Activated naive CD4-positive, alpha-beta T cell treated with anti-CD3 and anti-CD28 coated beads for 36 hours (primary cell): ENCODE measurements at regions of chr2 and their contacts with region 1.

Region 1: GRCh38 chr2:64523666-64524603 is at the start of gene AFTPH:
- DNase-seq: peak; percentile 99
- H3K4me3 Mint-ChIP-seq: peak within 1 kb of the TSS; percentile 99
- H3K27ac Mint-ChIP-seq: peak within 1 kb of the TSS; percentile 100
- H3K4me1 Mint-ChIP-seq: peaks cover 26% of the 10 kb centered on the region
- H3K27me3 Mint-ChIP-seq: no peaks in the 10 kb centered on the region
- total RNA-seq, gene AFTPH: 25.3 to 27.3 TPM

Region 2: DNA sequence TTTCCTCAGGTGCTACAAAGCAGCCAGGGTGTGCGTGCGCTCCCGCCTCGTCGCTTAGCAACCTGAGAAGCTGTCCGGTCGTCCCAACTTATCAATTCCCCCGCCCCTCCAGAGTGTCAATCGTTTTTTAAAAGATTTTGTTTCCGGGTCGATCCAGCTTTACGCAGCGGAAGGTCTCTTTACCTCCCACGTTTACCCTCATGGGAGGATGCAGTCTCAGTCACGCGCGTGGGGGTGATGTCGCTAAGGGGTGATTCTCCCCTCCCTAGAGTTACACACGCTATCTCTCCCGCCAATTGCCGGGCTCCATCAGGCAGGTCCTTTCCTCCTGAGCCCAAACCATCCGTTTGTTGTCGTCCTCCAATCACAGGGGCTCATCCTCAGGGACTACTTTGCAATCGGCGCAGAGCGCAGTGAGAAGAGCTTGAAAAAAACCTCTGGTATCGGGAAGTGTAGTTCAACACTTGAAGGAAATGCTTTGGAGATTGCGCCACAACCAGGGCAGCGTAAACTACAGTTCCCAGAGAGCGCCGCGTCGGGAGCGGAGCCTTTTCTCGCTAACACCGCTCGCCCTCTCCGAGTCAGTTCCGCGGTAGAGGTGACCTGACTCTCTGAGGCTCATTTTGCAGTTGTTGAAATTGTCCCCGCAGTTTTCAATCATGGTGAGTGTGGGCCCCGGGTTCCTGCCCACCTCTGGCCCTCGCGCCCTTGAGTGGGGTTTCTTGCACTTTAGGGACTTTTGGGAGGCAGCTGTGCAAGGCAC is 935.4 kb before region 1 on chr2 and contains the starts of genes MDH1 and WDPCP:
- CTCF ChIA-PET with region 1: no interaction called
- intact Hi-C with region 1: loop called (anchors 1 kb)
- DNase-seq: peak; percentile 95
- H3K4me3 Mint-ChIP-seq: peak within 1 kb of the TSS; percentile 99
- H3K27ac Mint-ChIP-seq: peak within 1 kb of the TSS; percentile 94
- H3K4me1 Mint-ChIP-seq: peaks cover 31% of the 10 kb centered on the region
- H3K27me3 Mint-ChIP-seq: no peaks in the 10 kb centered on the region
- total RNA-seq, gene MDH1: 269 to 275 TPM
- total RNA-seq, gene WDPCP: 5.6 to 5.7 TPM

Region 3: DNA sequence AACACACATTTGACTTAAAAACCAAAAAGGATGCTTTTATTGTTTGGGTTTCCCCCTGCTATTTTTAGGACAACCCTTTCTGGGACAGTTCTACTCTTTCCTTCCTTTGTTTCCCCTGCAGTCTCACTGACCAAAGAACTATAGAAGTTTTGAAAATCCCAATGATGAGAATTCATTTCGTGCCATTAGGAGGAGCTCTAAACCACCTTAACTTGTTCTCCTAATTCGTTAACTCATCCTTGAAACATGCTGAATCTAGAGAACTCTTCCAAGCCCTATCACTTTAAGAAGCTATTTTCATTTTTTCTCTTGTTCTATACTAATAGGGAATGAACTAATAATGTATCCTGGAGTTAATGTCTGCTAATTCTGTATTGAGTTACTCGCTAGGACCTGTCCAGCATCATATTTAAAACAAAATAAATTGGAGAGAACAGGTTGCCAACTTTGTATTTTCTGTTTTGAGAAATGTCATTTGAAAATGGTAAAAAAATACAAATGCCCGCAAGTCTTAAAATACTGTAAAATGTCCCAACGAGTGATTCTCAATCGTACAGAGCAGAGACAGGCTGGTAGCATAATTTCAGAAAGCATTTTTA is 63.0 kb after region 1 on chr2:
- CTCF ChIA-PET with region 1: interaction called, 12 read pairs
- intact Hi-C with region 1: loop called (anchors 2 kb)
- DNase-seq: no peak
- H3K4me3 Mint-ChIP-seq: no peak overlapping the region
- H3K27ac Mint-ChIP-seq: no peak overlapping the region
- H3K4me1 Mint-ChIP-seq: peaks cover 16% of the 10 kb centered on the region
- H3K27me3 Mint-ChIP-seq: no peaks in the 10 kb centered on the region

Region 4: DNA sequence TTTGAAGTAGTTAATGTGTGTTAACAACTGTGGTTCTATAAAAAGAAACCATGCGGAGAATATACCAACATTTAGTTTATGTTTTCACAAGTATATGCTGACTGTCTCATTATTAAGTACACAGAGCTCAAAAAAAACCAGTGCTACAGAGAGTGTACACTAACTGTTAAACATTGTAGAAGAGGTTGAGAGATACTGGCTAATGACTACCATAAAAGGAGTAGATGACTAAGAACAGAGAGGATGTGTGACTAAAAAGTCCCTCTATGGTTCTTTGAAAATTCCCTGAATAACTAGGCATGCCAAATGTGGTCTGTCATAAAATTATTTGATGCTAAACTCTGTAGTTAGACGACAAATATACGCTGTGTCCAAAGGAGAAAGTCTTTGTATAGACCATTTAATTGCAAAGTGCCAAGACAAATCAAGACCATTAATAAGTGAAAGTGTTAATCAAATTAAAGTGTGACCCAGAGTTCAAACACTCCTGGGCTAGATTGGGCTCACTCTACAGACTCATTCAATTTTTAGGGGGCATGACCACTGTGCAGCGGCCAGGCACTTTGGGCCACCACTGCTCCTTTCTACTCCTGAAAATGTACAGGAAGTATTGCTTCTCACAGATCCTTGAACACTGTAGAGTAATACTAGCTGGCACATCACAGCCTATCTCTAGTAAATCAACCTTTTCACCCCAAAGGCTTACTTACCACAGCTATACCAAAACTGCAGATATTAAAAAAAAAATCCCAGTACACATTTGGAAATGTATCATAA is 174.9 kb after region 1 on chr2:
- CTCF ChIA-PET with region 1: no interaction called
- intact Hi-C with region 1: loop called (anchors 1 kb)
- DNase-seq: no peak
- H3K4me3 Mint-ChIP-seq: peak overlapping the region; percentile 8
- H3K27ac Mint-ChIP-seq: peak overlapping the region; percentile 68
- H3K4me1 Mint-ChIP-seq: peaks cover 47% of the 10 kb centered on the region
- H3K27me3 Mint-ChIP-seq: no peaks in the 10 kb centered on the region

Region 5: DNA sequence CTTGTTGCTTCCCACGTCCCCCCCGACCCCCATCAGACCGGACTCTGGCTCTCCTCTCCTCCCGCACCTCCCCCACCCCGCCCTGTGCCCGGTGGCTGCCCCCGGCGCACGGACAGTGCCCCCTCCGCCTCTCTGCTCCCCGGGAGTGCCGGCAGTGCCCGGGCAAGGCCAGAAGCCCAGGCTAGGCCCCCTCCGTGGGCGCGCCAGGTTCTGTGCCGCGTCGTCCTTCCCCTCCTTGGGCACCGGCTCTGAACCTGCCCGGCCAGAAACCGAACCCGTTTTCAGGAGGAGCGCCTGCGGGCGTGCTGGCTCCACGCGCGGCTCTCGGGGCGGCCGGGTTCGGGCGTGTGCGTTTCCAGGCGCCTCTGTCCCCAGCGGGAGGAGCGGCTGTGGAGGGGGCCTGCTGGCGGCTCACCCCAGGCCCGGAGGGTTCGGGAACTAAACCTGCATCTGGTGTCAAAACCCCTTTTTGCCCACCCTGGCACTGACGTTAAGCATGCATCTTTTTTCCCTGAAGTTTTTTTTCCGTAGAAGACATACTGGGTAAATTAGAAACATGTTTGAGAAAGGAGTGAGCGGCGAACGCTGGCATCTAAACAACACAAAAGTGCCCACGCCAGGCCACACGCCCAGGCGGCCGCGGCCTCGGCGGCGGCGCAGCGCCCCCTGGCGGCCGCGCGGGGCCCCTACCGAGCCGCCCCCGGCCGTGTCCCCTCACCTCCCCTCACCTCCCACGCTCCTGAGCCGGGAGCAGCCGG is 341.3 kb after region 1 on chr2:
- CTCF ChIA-PET with region 1: interaction called, 10 read pairs
- intact Hi-C with region 1: loop called (anchors 1 kb)
- DNase-seq: peak; percentile 59
- H3K4me3 Mint-ChIP-seq: peak overlapping the region; percentile 55
- H3K27ac Mint-ChIP-seq: no peak overlapping the region
- H3K4me1 Mint-ChIP-seq: no peaks in the 10 kb centered on the region
- H3K27me3 Mint-ChIP-seq: peaks cover 3% of the 10 kb centered on the region

Region 6: DNA sequence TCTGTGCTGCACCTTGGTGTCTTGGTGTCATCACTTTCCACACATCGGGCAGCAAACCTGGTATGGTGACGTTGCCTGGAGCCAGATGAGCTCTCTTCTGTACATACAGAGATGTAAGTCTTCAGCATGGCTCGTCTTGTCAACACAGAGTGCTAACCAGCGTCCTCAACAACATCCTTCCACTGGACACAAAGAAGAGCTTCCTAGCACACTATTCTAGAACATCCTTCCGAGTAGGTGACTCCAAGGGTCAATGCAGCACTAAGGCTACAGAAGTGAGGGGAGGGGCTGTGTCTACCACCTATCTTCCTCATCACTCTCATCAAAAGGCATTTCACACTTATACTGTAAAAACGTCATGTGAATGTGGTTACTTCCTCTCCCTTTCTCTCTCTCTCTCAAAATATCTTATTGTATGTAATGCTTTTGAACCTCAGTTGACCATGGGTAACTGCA is 357.1 kb after region 1 on chr2:
- CTCF ChIA-PET with region 1: no interaction called
- intact Hi-C with region 1: no loop called
- DNase-seq: no peak
- H3K4me3 Mint-ChIP-seq: no peak overlapping the region
- H3K27ac Mint-ChIP-seq: no peak overlapping the region
- H3K4me1 Mint-ChIP-seq: no peaks in the 10 kb centered on the region
- H3K27me3 Mint-ChIP-seq: no peaks in the 10 kb centered on the region

Region 7: GRCh38 chr2:65056215-65057053 is 532.5 kb after region 1 on chr2 and contains the start of gene CEP68:
- CTCF ChIA-PET with region 1: no interaction called
- intact Hi-C with region 1: loop called (anchors 1 kb)
- DNase-seq: peak; percentile 98
- H3K4me3 Mint-ChIP-seq: peak within 1 kb of the TSS; percentile 93
- H3K27ac Mint-ChIP-seq: peak within 1 kb of the TSS; percentile 67
- H3K4me1 Mint-ChIP-seq: peaks cover 51% of the 10 kb centered on the region
- H3K27me3 Mint-ChIP-seq: no peaks in the 10 kb centered on the region
- total RNA-seq, gene CEP68: 6.0 to 7.3 TPM